HAP-1 (cell line): ENCODE measurements at regions of chr3 and their contacts with region 1.

Region 1: GRCh38 chr3:64533617-64534317 is 154.0 kb downstream of the ADAMTS9 start:
- DNase-seq: peak; percentile 85 to 92
- H3K4me3 ChIP-seq: no peak overlapping the region
- H3K4me1 ChIP-seq: no peaks in the 10 kb centered on the region
- H3K27me3 ChIP-seq: 0 out of 2 replicates have a peak, but pooled peaks cover 2% of the 10 kb centered on the region

Region 2: DNA sequence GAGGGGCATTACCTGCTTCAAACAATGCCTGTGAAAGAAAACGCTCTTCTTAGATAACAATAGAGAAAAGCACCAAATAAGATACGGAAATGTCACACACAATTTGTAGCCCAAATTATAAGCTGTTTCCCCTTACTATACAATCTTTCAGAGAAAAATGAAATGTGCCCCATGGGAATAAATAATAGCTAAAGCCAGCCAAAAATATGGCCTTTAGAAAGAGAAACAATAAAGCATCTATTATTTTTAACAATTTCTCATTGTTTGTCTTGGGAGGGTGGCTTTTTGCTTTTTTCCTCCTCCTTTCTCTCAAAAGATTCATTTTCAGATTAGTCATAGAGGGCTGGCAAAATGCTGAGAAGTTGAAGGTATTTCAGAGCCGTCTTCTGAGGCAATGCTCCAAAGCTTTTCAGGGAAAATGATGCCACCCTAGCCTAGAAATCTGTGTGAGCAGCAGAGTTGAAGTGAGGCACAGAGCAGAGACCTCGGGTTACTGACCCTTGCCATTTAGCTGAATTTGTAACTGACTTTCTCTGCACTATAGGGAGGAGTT is 222.3 kb before region 1 on chr3:
- in situ Hi-C with region 1: no loop called
- DNase-seq: peak in 1 of 2 experiments; percentile 18
- H3K4me3 ChIP-seq: no peak overlapping the region
- H3K4me1 ChIP-seq: peaks cover 14% of the 10 kb centered on the region
- H3K27me3 ChIP-seq: no peaks in the 10 kb centered on the region

Region 3: DNA sequence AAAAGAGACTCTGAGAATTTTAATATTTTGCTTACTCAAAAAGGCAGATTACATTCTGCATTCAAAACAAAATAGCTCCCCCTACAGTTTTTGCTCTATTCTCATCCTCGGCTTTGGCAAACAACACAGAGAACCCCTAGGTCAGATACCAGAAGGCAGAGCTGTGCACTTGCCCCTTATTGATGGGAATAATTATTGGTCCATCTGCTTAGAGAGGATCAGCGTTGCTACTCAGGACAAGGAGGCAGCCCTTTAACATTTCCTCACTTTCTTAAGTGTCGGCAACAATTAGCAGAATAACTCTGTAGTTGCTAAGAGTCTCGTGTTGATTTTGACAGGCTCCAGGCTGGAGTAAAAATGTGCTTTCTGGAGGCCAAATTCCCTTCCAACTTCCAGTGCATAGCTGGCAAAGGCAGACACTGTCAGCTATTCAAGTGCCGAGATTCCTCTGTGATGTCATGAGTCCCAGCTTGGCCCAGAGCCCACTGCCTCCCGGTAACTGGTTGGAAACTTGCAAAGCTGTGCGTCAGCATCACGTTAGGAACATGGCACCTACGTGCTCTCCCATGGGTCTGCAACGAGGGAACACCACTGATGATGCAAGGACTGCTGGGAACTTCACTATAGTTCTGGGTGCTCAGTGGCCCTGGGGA is 636.7 kb after region 1 on chr3:
- in situ Hi-C with region 1: loop called (anchors 25 kb)
- DNase-seq: peak; percentile 12 to 29
- H3K4me3 ChIP-seq: no peak overlapping the region
- H3K4me1 ChIP-seq: no peaks in the 10 kb centered on the region
- H3K27me3 ChIP-seq: peaks cover 3% of the 10 kb centered on the region; the same call in 1 of the 2 replicates

Region 4: GRCh38 chr3:65245133-65246063 is 711.6 kb after region 1 on chr3:
- in situ Hi-C with region 1: loop called (anchors 5 kb)
- DNase-seq: no peak
- H3K4me3 ChIP-seq: no peak overlapping the region
- H3K4me1 ChIP-seq: no peaks in the 10 kb centered on the region
- H3K27me3 ChIP-seq: no peaks in the 10 kb centered on the region; the same call in 1 of the 2 replicates

Region 5: DNA sequence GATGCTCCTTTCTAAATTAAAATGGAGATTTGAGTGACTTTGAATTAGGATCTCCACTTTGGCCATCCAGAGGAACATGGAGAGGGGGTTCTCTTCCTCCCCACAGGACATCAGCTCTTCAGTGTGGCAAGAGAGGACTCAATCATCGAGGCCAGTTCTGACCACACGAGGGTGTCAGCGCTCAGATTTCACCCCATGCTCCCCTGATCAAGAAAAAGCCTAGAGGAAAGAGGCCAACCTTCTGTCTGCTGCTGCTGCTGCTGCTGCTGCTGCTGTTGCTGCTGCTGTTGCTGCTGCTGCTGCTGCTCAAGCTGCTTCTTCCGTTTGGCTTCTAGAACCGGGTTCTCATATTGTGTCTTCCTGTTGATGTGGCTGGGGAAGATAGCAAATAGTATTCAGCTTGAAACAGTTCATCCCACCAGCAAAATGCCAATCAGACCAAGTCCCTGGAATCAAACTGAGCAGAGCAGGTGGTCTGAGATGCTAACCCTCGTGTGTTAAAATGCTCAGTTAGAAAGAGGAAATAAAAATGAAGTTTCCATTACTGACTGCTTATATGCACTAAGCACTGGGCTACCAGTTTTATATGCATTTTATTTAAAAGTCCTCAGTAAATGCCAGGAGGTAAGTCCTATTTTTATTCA is 906.0 kb after region 1 on chr3:
- in situ Hi-C with region 1: loop called (anchors 10 kb)
- DNase-seq: peak; percentile 57 to 73
- H3K4me3 ChIP-seq: no peak overlapping the region
- H3K4me1 ChIP-seq: peaks cover 14% of the 10 kb centered on the region
- H3K27me3 ChIP-seq: 0 out of 2 replicates have a peak, but pooled peaks cover 1% of the 10 kb centered on the region

Region 6: DNA sequence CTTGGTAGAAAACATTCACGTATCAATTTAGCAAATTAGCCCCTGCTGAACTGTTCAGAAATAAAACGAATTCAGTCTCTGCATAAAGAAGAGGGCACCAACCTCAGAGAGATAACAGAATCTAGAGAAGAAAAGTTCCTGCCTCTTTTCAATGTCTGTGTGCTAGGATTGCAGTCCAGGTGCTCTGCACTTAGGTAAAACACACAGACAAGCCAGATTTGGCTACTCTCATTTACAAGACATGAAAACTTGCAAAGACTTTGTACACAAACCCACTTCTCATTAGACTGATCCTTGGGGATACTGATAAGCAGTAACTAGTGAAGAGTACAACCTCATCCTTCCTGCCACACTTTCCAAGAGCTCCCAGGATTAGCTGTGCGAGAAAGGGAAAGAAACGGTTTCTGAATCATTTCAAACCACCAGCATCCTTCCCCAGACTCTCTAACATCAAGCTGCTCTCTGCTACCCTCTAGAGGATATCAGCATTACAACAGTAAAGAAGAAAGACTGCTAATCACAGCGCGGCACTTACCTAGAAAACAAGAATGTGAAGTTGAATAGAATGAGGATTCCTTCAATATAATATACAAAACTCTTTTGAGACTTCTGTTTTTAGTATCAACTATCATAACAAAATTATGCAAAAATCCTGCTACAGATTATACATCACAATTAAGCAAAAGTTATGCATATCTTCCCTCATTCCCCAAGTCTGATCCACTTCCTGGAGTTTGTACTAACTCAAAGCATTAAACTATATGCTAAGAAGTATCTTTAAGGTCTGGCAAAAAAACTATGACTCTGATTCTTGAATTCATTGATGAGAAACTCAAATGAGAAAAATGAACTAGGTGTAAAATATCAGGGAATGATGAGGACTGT is 1198.5 kb after region 1 on chr3:
- in situ Hi-C with region 1: loop called (anchors 25 kb)
- DNase-seq: peak; percentile 37 to 64
- H3K4me3 ChIP-seq: no peak overlapping the region
- H3K4me1 ChIP-seq: no peaks in the 10 kb centered on the region
- H3K27me3 ChIP-seq: peaks cover 3% of the 10 kb centered on the region; the same call in 1 of the 2 replicates